Posterior cingulate gyrus (tissue), 11 donors: ENCODE measurements at regions of chr16 and their contacts with region 1.

Region 1: DNA sequence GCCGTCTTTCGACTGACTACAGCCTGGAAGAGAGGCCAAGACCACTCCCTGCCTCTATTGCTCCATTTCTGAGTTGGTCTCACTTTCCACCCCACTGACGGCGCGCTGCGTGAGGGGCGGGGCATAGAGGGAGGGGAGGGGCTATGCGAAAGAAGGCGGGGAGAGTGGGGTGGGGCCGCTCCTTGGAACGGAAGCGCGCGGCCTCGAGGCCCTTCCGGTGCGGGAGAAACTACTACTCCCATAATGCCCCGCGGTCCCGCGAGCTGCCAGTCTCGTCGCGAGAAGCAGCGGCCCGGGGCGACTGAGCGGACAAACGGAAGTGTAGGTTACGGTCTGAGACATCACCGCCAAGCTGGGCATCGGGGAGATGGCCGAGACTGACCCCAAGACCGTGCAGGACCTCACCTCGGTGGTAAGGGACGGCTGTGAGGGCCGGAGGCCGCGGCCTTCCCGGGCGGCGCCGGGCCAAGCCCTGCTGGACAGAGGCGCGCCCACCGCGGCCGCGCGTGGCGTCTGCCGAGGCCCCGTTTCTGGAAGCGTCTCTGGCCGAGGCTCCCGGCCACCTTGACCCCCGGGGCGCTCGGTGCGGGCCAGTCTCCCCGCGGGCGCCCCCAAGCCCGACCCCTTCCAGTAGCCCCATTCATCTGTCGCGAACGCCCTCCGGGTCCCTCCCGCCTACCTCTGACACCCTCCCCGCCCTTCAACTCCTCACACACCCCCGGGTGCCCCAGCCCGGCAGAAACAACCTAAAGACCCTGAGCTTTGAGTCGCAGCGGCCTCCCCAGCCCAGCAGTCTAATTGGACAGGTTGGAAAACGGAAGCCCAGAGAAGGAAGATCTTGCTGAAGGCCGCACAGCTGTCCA is at the start of gene HSBP1:
- DNase-seq: peak; percentile 86 to 98 (median 92)

Region 2: GRCh38 chr16:83744441-83744981 is 63.4 kb before region 1 on chr16:
- intact Hi-C with region 1: loop called (anchors 5 kb)
- DNase-seq: peak in 7 of 10 donors; percentile 10 to 83 (median 42)

Region 3: GRCh38 chr16:83898463-83899271 is 90.7 kb after region 1 on chr16 and contains the start of gene MLYCD:
- intact Hi-C with region 1: loop called (anchors 5 kb)
- DNase-seq: peak; percentile 74 to 97 (median 81)